ENCODE measurements at regions of chr1 and their contacts with region 1.

Region 1: DNA sequence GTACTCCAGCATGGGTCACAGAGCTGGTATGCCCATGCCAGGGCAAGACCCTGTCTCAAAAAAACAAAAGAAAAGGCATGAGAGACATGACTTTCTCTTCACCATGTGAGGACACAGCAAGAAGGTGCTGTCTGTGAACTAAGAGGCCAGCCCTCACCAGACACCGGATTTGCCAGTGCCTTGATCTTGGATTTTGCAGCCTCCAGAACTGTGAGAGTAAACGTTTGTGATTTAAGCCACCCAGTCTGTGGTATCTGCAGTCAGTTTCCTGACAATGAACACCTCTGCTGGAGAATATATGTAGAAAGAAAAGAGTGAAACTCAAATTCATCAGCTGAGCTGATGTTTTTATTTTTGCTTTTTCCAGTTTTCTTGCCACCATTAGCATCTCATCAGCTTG is 166.3 kb upstream of the RAB4A start:
- DNase-seq: no peak
- ATAC-seq: no peak
- H3K4me3 ChIP-seq: no peak overlapping the region
- H3K27ac ChIP-seq: no peak overlapping the region
- H3K4me1 ChIP-seq: peaks cover 0 to 10% (median 0%) of the 10 kb centered on the region in 9 donors
- H3K27me3 ChIP-seq: peaks cover 0 to 21% (median 0%) of the 10 kb centered on the region in 7 donors
- CTCF ChIP-seq: no peak

Region 2: GRCh38 chr1:229075217-229075616 is 29.4 kb before region 1 on chr1:
- intact Hi-C with region 1: loop called in 1 of 10 experiments (anchors 1 kb)
- DNase-seq: no peak
- ATAC-seq: no peak
- H3K4me3 ChIP-seq: no peak overlapping the region
- H3K27ac ChIP-seq: no peak overlapping the region
- H3K4me1 ChIP-seq: peaks cover 0 to 15% (median 6%) of the 10 kb centered on the region in 9 donors
- H3K27me3 ChIP-seq: peaks cover 0 to 10% (median 0%) of the 10 kb centered on the region in 7 donors
- CTCF ChIP-seq: no peak